H1 (cell line): ENCODE measurements at regions of chr10 and their contacts with region 1.

Region 1: DNA sequence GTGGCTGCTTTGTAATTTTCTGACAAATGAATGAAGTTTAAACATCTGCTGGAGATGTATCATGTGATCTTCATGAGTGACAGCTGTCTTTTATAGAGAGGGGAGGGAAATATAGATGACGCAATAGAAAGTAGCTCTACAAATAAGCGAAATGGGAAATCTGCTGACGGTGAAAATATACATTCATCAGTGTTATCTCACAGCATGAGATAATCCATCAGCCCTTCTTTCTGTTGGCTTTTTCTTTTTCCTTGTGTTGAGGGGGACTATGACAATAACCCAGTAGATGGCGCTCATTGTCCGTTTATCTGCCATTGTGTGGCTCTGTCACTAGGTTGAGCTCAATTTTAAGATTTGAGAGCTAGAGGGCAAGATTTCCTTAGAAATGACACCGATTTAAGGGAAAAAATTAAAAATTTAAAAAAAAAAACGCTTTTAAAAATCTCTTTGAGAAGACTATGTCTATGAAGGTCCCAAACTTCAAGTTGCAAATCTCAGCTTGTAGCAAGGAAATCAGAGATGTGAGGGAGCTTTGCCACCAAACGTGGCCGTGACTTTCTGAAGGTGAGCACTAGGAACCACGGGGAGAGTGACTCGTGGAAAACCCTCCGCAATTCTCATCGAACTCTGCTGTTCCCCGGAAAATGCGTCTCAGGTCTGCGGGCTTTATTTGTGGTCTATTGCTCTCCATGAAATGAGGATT is 114.6 kb upstream of the SFMBT2 start:
- DNase-seq: peak in 1 of 2 experiments; percentile 67
- H3K4me3 ChIP-seq: no peak overlapping the region
- H3K27ac ChIP-seq: no peak overlapping the region
- H3K4me1 ChIP-seq: no peaks in the 10 kb centered on the region; a peak in 1 of 7 replicates
- H3K27me3 ChIP-seq: no peaks in the 10 kb centered on the region
- CTCF ChIP-seq: peak in 2 of 3 experiments; percentile 77 to 97; a peak in 3 of 4 replicates
- EP300 ChIP-seq: no peak
- POLR2A ChIP-seq: no peak
- RAD21 ChIP-seq: peak; percentile 96 to 97

Region 2: DNA sequence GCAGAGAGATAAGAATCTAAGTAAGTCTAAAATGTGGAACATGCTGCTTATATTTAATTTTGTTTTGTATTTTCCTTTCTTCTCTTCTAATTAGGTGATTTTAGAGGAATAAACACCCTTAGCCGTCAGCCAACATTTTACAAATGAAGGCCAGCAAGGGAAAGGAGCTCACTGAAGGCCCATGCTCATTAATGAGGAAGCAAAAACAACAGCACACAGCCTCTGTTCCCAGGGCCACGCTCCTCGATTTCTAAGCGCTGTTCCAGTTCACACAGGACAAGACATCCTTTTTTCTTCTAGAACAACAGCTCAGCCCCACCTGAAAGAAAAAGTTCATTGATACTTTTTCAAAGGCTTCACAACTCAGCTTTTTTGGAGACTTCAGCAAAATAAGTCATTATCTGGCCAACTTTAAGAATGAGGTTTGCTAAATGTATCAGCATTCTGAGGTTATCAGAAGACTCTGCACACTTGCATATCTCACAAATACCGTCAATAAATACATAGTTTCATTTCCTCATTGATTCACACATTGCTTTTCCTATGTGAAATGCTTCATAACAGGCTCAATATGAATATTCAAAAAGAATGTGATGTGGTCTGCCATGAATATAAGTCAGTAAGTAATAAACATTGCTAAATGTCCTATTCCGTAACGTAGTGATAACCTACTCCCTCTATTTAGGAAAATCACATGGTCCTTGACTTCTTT is 79.8 kb before region 1 on chr10:
- CTCF ChIA-PET with region 1: no interaction called
- POLR2A ChIA-PET with region 1: no interaction called
- DNase-seq: no peak
- H3K4me3 ChIP-seq: no peak overlapping the region
- H3K27ac ChIP-seq: no peak overlapping the region
- H3K4me1 ChIP-seq: peaks cover 0 to 3% (median 0%) of the 10 kb centered on the region in 4 experiments; a peak in 3 of 7 replicates
- H3K27me3 ChIP-seq: no peaks in the 10 kb centered on the region
- CTCF ChIP-seq: no peak
- EP300 ChIP-seq: no peak
- POLR2A ChIP-seq: no peak
- RAD21 ChIP-seq: no peak

Region 3: GRCh38 chr10:7474388-7474787 is 51.1 kb before region 1 on chr10:
- CTCF ChIA-PET with region 1: no interaction called
- POLR2A ChIA-PET with region 1: no interaction called
- DNase-seq: no peak
- H3K4me3 ChIP-seq: no peak overlapping the region
- H3K27ac ChIP-seq: no peak overlapping the region
- H3K4me1 ChIP-seq: peaks cover 3 to 9% (median 4%) of the 10 kb centered on the region in 4 experiments; a peak in 5 of 7 replicates
- H3K27me3 ChIP-seq: no peaks in the 10 kb centered on the region
- CTCF ChIP-seq: no peak
- EP300 ChIP-seq: no peak
- POLR2A ChIP-seq: no peak
- RAD21 ChIP-seq: no peak

Region 4: DNA sequence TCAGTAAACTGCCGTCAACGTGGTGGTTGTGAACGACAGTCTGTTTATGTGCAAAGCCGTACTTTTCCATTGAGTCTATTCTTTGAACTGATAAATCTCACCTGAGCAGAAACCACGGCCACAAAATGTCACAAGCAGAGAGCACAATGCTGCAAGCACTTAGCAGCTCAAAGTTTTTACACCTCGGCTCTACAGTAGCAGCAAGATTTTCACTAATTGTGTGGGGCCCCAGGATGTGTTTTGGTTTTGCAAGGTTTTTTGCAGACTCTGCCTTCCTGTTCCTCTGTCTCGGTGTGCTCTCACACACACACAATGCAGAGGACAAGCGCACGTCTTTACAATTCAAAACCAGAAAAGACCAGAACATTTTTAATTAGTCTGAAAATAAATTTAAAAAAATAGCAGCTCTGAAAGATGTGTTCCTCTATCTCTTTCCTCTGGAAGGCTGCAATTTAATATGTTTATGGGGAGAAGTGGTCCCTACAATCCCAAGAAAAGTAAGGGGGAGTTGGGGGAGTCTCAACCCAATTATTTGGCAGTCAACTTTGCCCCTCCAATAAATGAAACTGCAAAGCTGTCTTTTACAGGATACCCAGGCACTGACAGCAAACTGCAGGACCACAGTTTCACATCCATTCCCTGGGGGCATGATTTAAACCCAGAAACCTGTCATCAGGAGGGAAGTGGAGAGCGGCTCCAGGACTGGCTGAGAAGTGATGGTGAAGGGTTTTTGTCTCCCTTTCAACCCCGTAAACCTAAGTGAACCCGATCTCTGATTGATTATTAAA is 40.8 kb before region 1 on chr10:
- CTCF ChIA-PET with region 1: no interaction called
- POLR2A ChIA-PET with region 1: no interaction called
- DNase-seq: no peak
- H3K4me3 ChIP-seq: no peak overlapping the region
- H3K27ac ChIP-seq: no peak overlapping the region
- H3K4me1 ChIP-seq: peaks cover 0 to 3% (median 3%) of the 10 kb centered on the region in 4 experiments; a peak in 3 of 7 replicates
- H3K27me3 ChIP-seq: no peaks in the 10 kb centered on the region
- CTCF ChIP-seq: no peak
- EP300 ChIP-seq: no peak
- POLR2A ChIP-seq: no peak
- RAD21 ChIP-seq: no peak

Region 5: GRCh38 chr10:7515439-7515838 is 10.0 kb before region 1 on chr10:
- CTCF ChIA-PET with region 1: interaction called, 12 read pairs
- POLR2A ChIA-PET with region 1: no interaction called
- DNase-seq: no peak
- H3K4me3 ChIP-seq: no peak overlapping the region
- H3K27ac ChIP-seq: no peak overlapping the region
- H3K4me1 ChIP-seq: no peaks in the 10 kb centered on the region
- H3K27me3 ChIP-seq: no peaks in the 10 kb centered on the region
- CTCF ChIP-seq: no peak
- EP300 ChIP-seq: no peak
- POLR2A ChIP-seq: no peak
- RAD21 ChIP-seq: no peak

Region 6: DNA sequence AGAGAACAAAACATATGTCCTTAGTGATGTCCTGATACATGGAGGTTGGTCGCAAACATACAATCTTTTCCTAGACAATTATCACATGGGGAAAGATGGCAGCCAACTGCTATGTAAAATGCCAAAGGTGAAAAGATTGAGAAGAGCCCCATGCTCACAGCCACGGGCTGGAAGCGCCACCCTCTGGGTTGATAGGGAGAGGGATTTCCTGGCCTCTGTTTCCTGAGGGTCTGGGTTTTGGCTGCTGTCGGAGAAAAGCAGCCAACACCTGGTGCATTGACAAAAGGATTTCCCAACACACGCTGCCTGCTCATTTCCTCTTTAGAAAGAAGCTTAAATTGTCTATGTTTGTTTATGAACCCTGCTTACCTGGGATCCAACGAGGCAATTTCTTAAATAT is 97.5 kb after region 1 on chr10:
- CTCF ChIA-PET with region 1: interaction called, 26 read pairs
- POLR2A ChIA-PET with region 1: no interaction called
- DNase-seq: peak in 1 of 2 experiments; percentile 59
- H3K4me3 ChIP-seq: no peak overlapping the region
- H3K27ac ChIP-seq: no peak overlapping the region
- H3K4me1 ChIP-seq: peaks cover 0 to 3% (median 0%) of the 10 kb centered on the region in 4 experiments; a peak in 1 of 7 replicates
- H3K27me3 ChIP-seq: no peaks in the 10 kb centered on the region
- CTCF ChIP-seq: peak; percentile 63 to 81 (median 73)
- EP300 ChIP-seq: no peak
- POLR2A ChIP-seq: no peak
- RAD21 ChIP-seq: peak; percentile 88 to 90

Region 7: GRCh38 chr10:7634142-7634894 is 108.9 kb after region 1 on chr10:
- CTCF ChIA-PET with region 1: interaction called, 11 read pairs
- POLR2A ChIA-PET with region 1: interaction called, 3 read pairs
- DNase-seq: no peak
- H3K4me3 ChIP-seq: no peak overlapping the region
- H3K27ac ChIP-seq: no peak overlapping the region
- H3K4me1 ChIP-seq: peaks cover 0 to 14% (median 9%) of the 10 kb centered on the region in 4 experiments; a peak in 5 of 7 replicates
- H3K27me3 ChIP-seq: no peaks in the 10 kb centered on the region
- CTCF ChIP-seq: no peak
- EP300 ChIP-seq: no peak
- POLR2A ChIP-seq: no peak
- RAD21 ChIP-seq: no peak

Region 8: DNA sequence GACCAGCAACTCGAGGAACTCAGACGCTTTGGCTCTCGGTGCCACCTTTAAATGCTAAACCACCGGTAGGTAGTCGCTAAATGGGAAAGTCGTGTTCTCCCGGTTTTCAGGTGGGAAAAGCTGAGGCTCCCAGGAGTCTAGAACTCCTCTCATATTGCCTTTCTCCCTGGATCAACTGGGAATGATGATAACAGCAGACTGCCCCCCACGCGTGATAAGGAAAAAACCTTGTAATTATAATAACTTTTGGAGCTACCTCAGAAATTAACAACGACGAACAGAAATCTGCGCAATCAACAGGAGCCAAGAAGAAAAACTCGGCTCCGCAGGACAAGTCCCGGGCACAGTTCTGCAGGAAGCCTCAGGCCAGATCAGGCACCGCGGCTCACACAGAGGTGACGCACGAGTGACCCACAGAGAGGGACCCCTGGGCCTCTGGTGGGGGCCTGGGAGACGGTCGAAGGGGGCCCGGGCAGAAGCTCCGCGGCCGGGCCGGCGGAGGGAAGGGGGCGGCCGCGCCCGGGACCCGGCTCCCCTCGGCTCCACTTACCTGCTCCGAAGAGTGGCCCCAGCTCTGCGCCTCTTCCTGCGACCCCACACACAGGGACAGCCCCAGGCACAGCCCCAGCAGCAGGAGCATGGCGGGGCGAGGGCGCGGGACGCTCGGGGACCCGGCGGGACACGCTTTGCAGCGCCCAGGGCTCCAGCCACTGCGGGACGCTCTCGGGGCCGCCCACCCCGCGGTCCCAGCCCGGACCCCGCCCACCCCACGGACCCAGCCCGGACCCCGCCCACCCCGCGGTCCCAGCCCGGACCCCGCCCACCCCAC is 141.0 kb after region 1 on chr10 and contains the start of gene ITIH5:
- CTCF ChIA-PET with region 1: interaction called, 11 read pairs
- POLR2A ChIA-PET with region 1: no interaction called
- DNase-seq: peak in 1 of 2 experiments; percentile 71
- H3K4me3 ChIP-seq: peak within 1 kb of the TSS; percentile 49 to 89 (median 70)
- H3K27ac ChIP-seq: no peak within 1 kb of the TSS
- H3K4me1 ChIP-seq: peaks cover 0 to 2% (median 0%) of the 10 kb centered on the region in 4 experiments; a peak in 2 of 7 replicates
- H3K27me3 ChIP-seq: peaks cover 0 to 20% (median 11%) of the 10 kb centered on the region in 4 experiments; a peak in 6 of 7 replicates
- CTCF ChIP-seq: no peak
- EP300 ChIP-seq: no peak
- POLR2A ChIP-seq: no peak
- RAD21 ChIP-seq: no peak
- total RNA-seq, gene ITIH5: 7.6 and 9.8 TPM in 2 replicates

Region 9: GRCh38 chr10:7738536-7739407 is 213.3 kb after region 1 on chr10:
- CTCF ChIA-PET with region 1: interaction called, 10 read pairs
- POLR2A ChIA-PET with region 1: no interaction called
- DNase-seq: no peak
- H3K4me3 ChIP-seq: no peak overlapping the region
- H3K27ac ChIP-seq: no peak overlapping the region
- H3K4me1 ChIP-seq: no peaks in the 10 kb centered on the region
- H3K27me3 ChIP-seq: no peaks in the 10 kb centered on the region
- CTCF ChIP-seq: no peak
- EP300 ChIP-seq: no peak
- POLR2A ChIP-seq: no peak
- RAD21 ChIP-seq: no peak